ENCODE measurements at regions of chr7 and their contacts with region 1.

Region 1: GRCh38 chr7:29337546-29338116 is 143.1 kb downstream of the CHN2 start:
- DNase-seq: peak; percentile 36 to 57 (median 46)
- H3K4me3 ChIP-seq: peak overlapping the region in 1 of 2 donors; percentile 35
- H3K4me3 Mint-ChIP-seq: peak overlapping the region; percentile 1 to 73 (median 50)
- H3K27ac ChIP-seq: no peak overlapping the region
- H3K27ac Mint-ChIP-seq: peak overlapping the region; percentile 14 to 90 (median 67)
- H3K4me1 ChIP-seq: peaks cover 27% of the 10 kb centered on the region
- H3K4me1 Mint-ChIP-seq: peaks cover 21 to 30% (median 24%) of the 10 kb centered on the region in 4 donors
- H3K27me3 ChIP-seq: no peaks in the 10 kb centered on the region
- H3K27me3 Mint-ChIP-seq: peaks cover 0 to 1% of the 10 kb centered on the region in 2 donors

Region 2: GRCh38 chr7:29189743-29190201 is 147.9 kb before region 1 on chr7:
- CTCF ChIA-PET with region 1: interaction called, 14 read pairs
- POLR2A ChIA-PET with region 1: no interaction called
- intact Hi-C with region 1: loop called (anchors 2 kb)
- DNase-seq: peak; percentile 23 to 44 (median 32)
- H3K4me3 ChIP-seq: no peak overlapping the region
- H3K4me3 Mint-ChIP-seq: no peak overlapping the region
- H3K27ac ChIP-seq: no peak overlapping the region
- H3K27ac Mint-ChIP-seq: no peak overlapping the region
- H3K4me1 ChIP-seq: no peaks in the 10 kb centered on the region
- H3K4me1 Mint-ChIP-seq: peaks cover 0 to 6% (median 4%) of the 10 kb centered on the region in 4 donors
- H3K27me3 ChIP-seq: no peaks in the 10 kb centered on the region
- H3K27me3 Mint-ChIP-seq: peaks cover 5 to 14% of the 10 kb centered on the region in 2 donors

Region 3: GRCh38 chr7:29194594-29195427 is 142.8 kb before region 1 on chr7 and contains the start of gene CHN2:
- CTCF ChIA-PET with region 1: interaction called, 14 read pairs
- POLR2A ChIA-PET with region 1: no interaction called
- intact Hi-C with region 1: loop called (anchors 2 kb)
- DNase-seq: peak; percentile 37 to 71 (median 48)
- H3K4me3 ChIP-seq: peak within 1 kb of the TSS; percentile 24 to 54
- H3K4me3 Mint-ChIP-seq: peak within 1 kb of the TSS; percentile 83 to 97 (median 90)
- H3K27ac ChIP-seq: no peak within 1 kb of the TSS
- H3K27ac Mint-ChIP-seq: peak within 1 kb of the TSS; percentile 37 to 96 (median 88)
- H3K4me1 ChIP-seq: peaks cover 16% of the 10 kb centered on the region
- H3K4me1 Mint-ChIP-seq: peaks cover 11 to 35% (median 20%) of the 10 kb centered on the region in 4 donors
- H3K27me3 ChIP-seq: no peaks in the 10 kb centered on the region
- H3K27me3 Mint-ChIP-seq: peaks cover 9 to 15% of the 10 kb centered on the region in 2 donors
- total RNA-seq, gene CHN2: 4.9 to 7.6 TPM

Region 4: DNA sequence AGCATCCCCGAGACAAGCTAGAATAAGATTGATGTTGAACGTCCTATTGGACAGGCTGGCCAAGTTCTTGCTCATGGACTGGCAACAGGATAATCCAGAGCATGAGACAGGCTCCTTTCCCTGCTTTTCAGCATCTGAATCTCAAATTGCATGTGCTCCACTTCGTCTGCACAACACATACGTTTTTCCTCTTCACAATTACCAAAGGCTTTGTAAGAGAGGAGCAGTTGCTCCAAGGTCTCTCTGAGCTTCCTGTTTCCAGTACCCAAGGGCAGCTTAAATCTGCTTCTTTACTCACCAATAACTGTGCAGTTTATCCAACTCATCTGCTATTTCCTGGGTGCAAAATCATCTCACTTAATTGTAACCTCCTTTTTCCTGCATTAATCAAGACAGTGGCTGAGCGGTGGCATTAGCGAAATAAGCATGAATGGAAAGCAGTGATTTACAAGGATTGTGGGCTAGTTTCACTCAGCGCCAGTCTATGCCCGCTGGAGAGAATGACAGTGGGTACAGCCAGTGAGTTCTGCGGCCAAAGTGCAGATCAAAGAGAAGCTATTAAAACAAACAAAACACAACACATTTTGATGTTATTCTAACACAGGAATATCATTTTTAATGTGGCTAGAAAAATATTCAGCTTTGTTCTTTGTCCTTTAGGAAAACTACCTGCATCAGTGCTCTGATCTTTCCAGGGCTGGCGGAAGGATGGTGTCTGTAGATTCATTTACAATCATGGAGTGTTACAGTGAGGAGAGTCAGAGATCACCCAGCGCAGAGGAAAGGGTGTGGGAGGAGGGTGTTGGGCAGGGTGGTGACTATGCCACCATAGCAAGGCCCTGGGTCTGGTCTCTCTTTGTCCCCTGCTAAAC is 63.2 kb before region 1 on chr7:
- CTCF ChIA-PET with region 1: no interaction called
- POLR2A ChIA-PET with region 1: no interaction called
- intact Hi-C with region 1: no loop called
- DNase-seq: no peak
- H3K4me3 ChIP-seq: no peak overlapping the region
- H3K4me3 Mint-ChIP-seq: no peak overlapping the region
- H3K27ac ChIP-seq: no peak overlapping the region
- H3K27ac Mint-ChIP-seq: no peak overlapping the region
- H3K4me1 ChIP-seq: peaks cover 19% of the 10 kb centered on the region
- H3K4me1 Mint-ChIP-seq: peaks cover 15 to 31% (median 23%) of the 10 kb centered on the region in 4 donors
- H3K27me3 ChIP-seq: no peaks in the 10 kb centered on the region
- H3K27me3 Mint-ChIP-seq: no peaks in the 10 kb centered on the region

Region 5: DNA sequence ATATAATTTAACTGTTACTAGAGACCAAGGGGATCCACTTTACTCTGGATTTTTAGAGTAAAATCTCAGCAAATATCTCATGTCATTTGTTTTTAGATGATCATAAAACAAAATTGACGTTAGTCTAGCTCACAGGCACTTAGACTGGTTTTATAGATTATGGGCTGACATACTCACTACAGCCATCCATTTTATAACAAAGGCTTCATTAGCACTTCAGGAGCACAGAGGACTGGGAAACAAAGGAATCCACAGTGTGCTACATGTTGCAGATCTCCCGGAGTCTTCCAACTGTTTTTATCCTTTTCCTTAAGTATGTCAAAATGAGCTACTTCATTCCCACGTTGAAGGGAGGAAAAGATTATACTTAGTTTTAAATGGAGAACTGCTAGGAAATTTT is 667.8 kb after region 1 on chr7:
- CTCF ChIA-PET with region 1: no interaction called
- POLR2A ChIA-PET with region 1: no interaction called
- intact Hi-C with region 1: no loop called
- DNase-seq: no peak
- H3K4me3 ChIP-seq: no peak overlapping the region
- H3K4me3 Mint-ChIP-seq: no peak overlapping the region
- H3K27ac ChIP-seq: no peak overlapping the region
- H3K27ac Mint-ChIP-seq: no peak overlapping the region
- H3K4me1 ChIP-seq: no peaks in the 10 kb centered on the region
- H3K4me1 Mint-ChIP-seq: no peaks in the 10 kb centered on the region
- H3K27me3 ChIP-seq: peaks cover 3% of the 10 kb centered on the region
- H3K27me3 Mint-ChIP-seq: peaks cover 10 to 11% of the 10 kb centered on the region in 2 donors